Sigmoid colon (tissue), 7 donors: ENCODE measurements at regions of chr11 and their contacts with region 1.

Region 1: GRCh38 chr11:121292495-121293287 is at the start of gene SC5D:
- DNase-seq: peak; percentile 98
- H3K4me3 ChIP-seq: peak within 1 kb of the TSS; percentile 69 to 81 (median 72)
- H3K27ac ChIP-seq: peak within 1 kb of the TSS; percentile 87 to 91 (median 90)
- H3K4me1 ChIP-seq: peaks cover 0 to 22% (median 18%) of the 10 kb centered on the region in 4 donors
- H3K27me3 ChIP-seq: no peaks in the 10 kb centered on the region
- CTCF ChIP-seq: no peak
- EP300 ChIP-seq: peak in 1 of 4 donors; percentile 41
- POLR2A ChIP-seq: peak; percentile 89 to 90
- total RNA-seq, gene SC5D: 25.5 to 33.5 (median 29.1) TPM

Region 2: GRCh38 chr11:121249039-121249663 is 43.5 kb before region 1 on chr11:
- intact Hi-C with region 1: loop called (anchors 5 kb)
- DNase-seq: no peak
- H3K4me3 ChIP-seq: no peak overlapping the region
- H3K27ac ChIP-seq: no peak overlapping the region
- H3K4me1 ChIP-seq: no peaks in the 10 kb centered on the region
- H3K27me3 ChIP-seq: no peaks in the 10 kb centered on the region
- CTCF ChIP-seq: peak; percentile 50 to 74 (median 71)
- EP300 ChIP-seq: no peak
- POLR2A ChIP-seq: no peak

Region 3: GRCh38 chr11:121464352-121464946 is 171.8 kb after region 1 on chr11:
- intact Hi-C with region 1: loop called (anchors 5 kb)
- DNase-seq: peak; percentile 89
- H3K4me3 ChIP-seq: no peak overlapping the region
- H3K27ac ChIP-seq: peak overlapping the region; percentile 80 to 89 (median 84)
- H3K4me1 ChIP-seq: peaks cover 0 to 59% (median 55%) of the 10 kb centered on the region in 4 donors
- H3K27me3 ChIP-seq: no peaks in the 10 kb centered on the region
- CTCF ChIP-seq: no peak
- EP300 ChIP-seq: peak in 1 of 4 donors; percentile 22
- POLR2A ChIP-seq: no peak

Region 4: DNA sequence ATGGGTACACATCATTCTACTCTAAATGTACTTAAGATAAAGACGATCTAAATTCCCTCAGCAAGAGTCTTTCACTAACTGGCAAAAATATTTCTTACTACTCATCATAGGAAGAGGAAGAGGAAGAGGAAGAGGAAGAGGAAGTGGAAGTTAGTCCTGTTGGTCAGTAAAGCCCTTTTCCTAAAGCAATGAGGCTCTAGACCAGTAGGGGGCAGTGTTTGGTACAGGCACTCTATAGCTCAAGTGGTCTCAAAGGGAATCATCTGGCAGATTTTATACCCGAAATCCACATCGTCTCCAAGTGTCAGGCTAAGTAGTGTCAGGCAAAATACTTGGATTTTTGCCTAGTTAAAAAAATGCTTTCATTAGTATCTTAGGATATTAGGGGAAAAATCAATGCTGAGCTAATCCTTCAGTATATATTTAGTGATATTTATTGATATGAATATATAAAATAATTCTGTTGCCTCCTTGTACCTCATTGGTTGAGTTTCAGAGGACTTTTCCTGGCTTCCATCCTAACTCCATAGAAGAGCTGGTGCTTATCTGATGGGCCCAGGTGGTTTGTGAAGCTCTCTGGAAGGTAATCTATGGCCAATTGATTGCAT is 815.6 kb after region 1 on chr11:
- intact Hi-C with region 1: loop called (anchors 10 kb)
- DNase-seq: no peak
- H3K4me3 ChIP-seq: no peak overlapping the region
- H3K27ac ChIP-seq: no peak overlapping the region
- H3K4me1 ChIP-seq: no peaks in the 10 kb centered on the region
- H3K27me3 ChIP-seq: no peaks in the 10 kb centered on the region
- CTCF ChIP-seq: peak in 3 of 4 experiments; percentile 13 to 46 (median 21)
- EP300 ChIP-seq: no peak
- POLR2A ChIP-seq: no peak